ENCODE measurements at regions of chr2 and their contacts with region 1.

Region 1: GRCh38 chr2:98433363-98433964 is 11.2 kb upstream of the INPP4A start:
- DNase-seq: no peak

Region 2: GRCh38 chr2:98263362-98263761 is 170.1 kb before region 1 on chr2:
- intact Hi-C with region 1: no loop called
- DNase-seq: no peak

Region 3: DNA sequence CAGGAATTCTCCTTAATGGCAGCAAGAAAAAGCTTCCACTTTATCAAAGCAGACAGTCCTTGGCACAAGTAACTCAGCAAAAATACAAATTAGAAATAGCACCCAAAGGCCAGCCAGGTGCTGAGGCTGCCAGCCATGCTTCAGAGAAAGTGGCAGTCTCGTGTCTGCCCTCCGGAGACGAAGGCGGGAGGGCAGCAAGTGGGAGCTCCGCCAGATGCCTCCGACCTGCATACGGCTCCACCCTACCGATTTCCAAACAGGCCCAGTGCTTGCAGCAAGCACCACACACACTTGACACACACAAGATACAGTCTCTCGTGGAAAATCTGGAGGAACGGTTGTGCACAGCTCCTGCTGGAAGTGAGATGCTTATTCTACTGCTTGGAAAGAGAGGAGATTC is 1191.2 kb after region 1 on chr2:
- intact Hi-C with region 1: loop called in 1 of 2 experiments (anchors 5 kb)
- DNase-seq: no peak

Region 4: GRCh38 chr2:99725820-99726219 is 1292.4 kb after region 1 on chr2:
- intact Hi-C with region 1: no loop called
- DNase-seq: no peak